ENCODE measurements at regions of chr15 and their contacts with region 1.

Region 1: GRCh38 chr15:70488002-70488605 is 275.3 kb downstream of the UACA start:
- DNase-seq: peak; percentile 75 to 87
- ATAC-seq: peak; percentile 17 to 46 (median 23)
- H3K4me3 ChIP-seq: no peak overlapping the region
- H3K4me3 Mint-ChIP-seq: peak overlapping the region; percentile 49
- H3K27ac ChIP-seq: no peak overlapping the region
- H3K27ac Mint-ChIP-seq: peak overlapping the region in 1 of 2 donors; percentile 86
- H3K4me1 ChIP-seq: peaks cover 65% of the 10 kb centered on the region
- H3K4me1 Mint-ChIP-seq: peaks cover 50 to 79% of the 10 kb centered on the region in 2 donors
- H3K27me3 ChIP-seq: peaks cover 23% of the 10 kb centered on the region
- H3K27me3 Mint-ChIP-seq: peaks cover 34 to 37% of the 10 kb centered on the region in 2 donors
- CTCF ChIP-seq: peak; percentile 88

Region 2: DNA sequence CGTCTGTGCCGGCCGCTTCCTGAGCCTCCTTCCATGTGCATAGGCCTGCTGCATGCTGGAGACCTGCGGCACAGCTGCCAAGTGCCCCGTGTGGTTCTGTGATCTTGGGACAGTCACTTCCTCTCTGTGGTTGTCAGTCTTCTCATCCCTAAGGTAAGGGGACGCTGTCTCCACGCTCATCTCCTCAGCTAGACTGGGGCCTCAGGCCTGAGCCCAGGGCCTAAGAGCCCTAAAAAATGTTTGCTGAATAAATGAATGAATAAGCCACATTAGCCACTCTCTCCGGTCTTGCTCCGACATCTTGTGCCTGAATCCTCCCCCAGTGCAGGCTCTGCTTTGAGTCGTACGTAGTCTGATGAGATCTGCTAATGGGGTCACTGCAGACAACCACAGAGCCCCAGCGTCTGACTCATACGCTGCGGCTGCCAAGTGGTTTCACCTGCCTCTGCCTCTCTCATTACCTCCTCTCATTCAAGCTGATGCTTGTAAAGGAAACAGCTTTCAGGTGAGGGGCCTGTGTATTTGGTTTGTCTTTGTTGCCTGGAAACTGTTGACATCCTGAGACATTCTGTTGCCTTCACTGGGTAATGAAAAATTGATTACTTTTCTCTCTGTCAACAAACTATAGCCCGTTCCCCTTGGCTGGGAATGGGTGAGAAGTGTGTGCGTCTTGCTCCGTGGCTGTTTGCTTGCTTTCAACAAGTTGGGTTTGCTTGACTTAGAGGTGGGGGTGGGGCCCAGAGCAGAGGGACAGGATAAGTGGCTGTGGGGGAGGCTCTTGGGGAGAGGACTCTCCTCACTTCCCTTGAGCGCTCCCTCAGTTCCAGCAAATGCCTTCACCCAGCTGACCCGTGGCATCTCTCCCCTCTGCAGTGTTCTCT is 1019.6 kb before region 1 on chr15:
- intact Hi-C with region 1: loop called (anchors 1 kb)
- DNase-seq: peak; percentile 85 to 95
- ATAC-seq: peak; percentile 82 to 94 (median 92)
- H3K4me3 ChIP-seq: no peak overlapping the region
- H3K4me3 Mint-ChIP-seq: peak overlapping the region; percentile 88
- H3K27ac ChIP-seq: peak overlapping the region; percentile 81
- H3K27ac Mint-ChIP-seq: peak overlapping the region; percentile 89 to 98
- H3K4me1 ChIP-seq: peaks cover 32% of the 10 kb centered on the region
- H3K4me1 Mint-ChIP-seq: peaks cover 20 to 21% of the 10 kb centered on the region in 2 donors
- H3K27me3 ChIP-seq: peaks cover 2% of the 10 kb centered on the region
- H3K27me3 Mint-ChIP-seq: peaks cover 17 to 30% of the 10 kb centered on the region in 2 donors
- CTCF ChIP-seq: no peak

Region 3: GRCh38 chr15:69729161-69729748 is 758.8 kb before region 1 on chr15:
- intact Hi-C with region 1: loop called (anchors 5 kb)
- DNase-seq: peak; percentile 68 to 87
- ATAC-seq: peak in 2 of 3 donors; percentile 37 to 50
- H3K4me3 ChIP-seq: no peak overlapping the region
- H3K4me3 Mint-ChIP-seq: no peak overlapping the region
- H3K27ac ChIP-seq: no peak overlapping the region
- H3K27ac Mint-ChIP-seq: no peak overlapping the region
- H3K4me1 ChIP-seq: peaks cover 39% of the 10 kb centered on the region
- H3K4me1 Mint-ChIP-seq: peaks cover 20 to 38% of the 10 kb centered on the region in 2 donors
- H3K27me3 ChIP-seq: no peaks in the 10 kb centered on the region
- H3K27me3 Mint-ChIP-seq: peaks cover 55 to 57% of the 10 kb centered on the region in 2 donors
- CTCF ChIP-seq: peak; percentile 85

Region 4: GRCh38 chr15:70097337-70098169 is 390.6 kb before region 1 on chr15 and contains the start of gene TLE3:
- intact Hi-C with region 1: loop called (anchors 5 kb)
- DNase-seq: peak; percentile 98 to 99
- ATAC-seq: peak; percentile 57 to 80 (median 70)
- H3K4me3 ChIP-seq: peak within 1 kb of the TSS; percentile 74
- H3K4me3 Mint-ChIP-seq: peak within 1 kb of the TSS; percentile 91
- H3K27ac ChIP-seq: peak within 1 kb of the TSS; percentile 94
- H3K27ac Mint-ChIP-seq: peak within 1 kb of the TSS; percentile 91 to 100
- H3K4me1 ChIP-seq: peaks cover 70% of the 10 kb centered on the region
- H3K4me1 Mint-ChIP-seq: peaks cover 49 to 66% of the 10 kb centered on the region in 2 donors
- H3K27me3 ChIP-seq: peaks cover 26% of the 10 kb centered on the region
- H3K27me3 Mint-ChIP-seq: peaks cover 23 to 38% of the 10 kb centered on the region in 2 donors
- CTCF ChIP-seq: peak; percentile 32
- total RNA-seq, gene TLE3: 32.1 to 94.9 (median 36.7) TPM

Region 5: GRCh38 chr15:70299931-70300869 is 187.9 kb before region 1 on chr15:
- intact Hi-C with region 1: loop called (anchors 2 kb)
- DNase-seq: peak; percentile 80 to 87
- ATAC-seq: peak; percentile 91 to 96 (median 94)
- H3K4me3 ChIP-seq: no peak overlapping the region
- H3K4me3 Mint-ChIP-seq: peak overlapping the region; percentile 55
- H3K27ac ChIP-seq: no peak overlapping the region
- H3K27ac Mint-ChIP-seq: peak overlapping the region; percentile 60 to 67
- H3K4me1 ChIP-seq: peaks cover 24% of the 10 kb centered on the region
- H3K4me1 Mint-ChIP-seq: peaks cover 9 to 11% of the 10 kb centered on the region in 2 donors
- H3K27me3 ChIP-seq: peaks cover 66% of the 10 kb centered on the region
- H3K27me3 Mint-ChIP-seq: peaks cover 32% of the 10 kb centered on the region in 2 donors
- CTCF ChIP-seq: no peak

Region 6: GRCh38 chr15:70528270-70528706 is 40.2 kb after region 1 on chr15:
- intact Hi-C with region 1: loop called (anchors 2 kb)
- DNase-seq: peak; percentile 42 to 86
- ATAC-seq: peak; percentile 91 to 98 (median 97)
- H3K4me3 ChIP-seq: no peak overlapping the region
- H3K4me3 Mint-ChIP-seq: peak overlapping the region; percentile 61
- H3K27ac ChIP-seq: peak overlapping the region; percentile 78
- H3K27ac Mint-ChIP-seq: peak overlapping the region; percentile 78 to 93
- H3K4me1 ChIP-seq: peaks cover 33% of the 10 kb centered on the region
- H3K4me1 Mint-ChIP-seq: peaks cover 13 to 24% of the 10 kb centered on the region in 2 donors
- H3K27me3 ChIP-seq: no peaks in the 10 kb centered on the region
- H3K27me3 Mint-ChIP-seq: peaks cover 0 to 2% of the 10 kb centered on the region in 2 donors
- CTCF ChIP-seq: no peak

Region 7: GRCh38 chr15:70636540-70637165 is 148.5 kb after region 1 on chr15:
- intact Hi-C with region 1: no loop called
- DNase-seq: no peak
- ATAC-seq: no peak
- H3K4me3 ChIP-seq: no peak overlapping the region
- H3K4me3 Mint-ChIP-seq: no peak overlapping the region
- H3K27ac ChIP-seq: no peak overlapping the region
- H3K27ac Mint-ChIP-seq: peak overlapping the region in 1 of 2 donors; percentile 7
- H3K4me1 ChIP-seq: no peaks in the 10 kb centered on the region
- H3K4me1 Mint-ChIP-seq: peaks cover 6 to 13% of the 10 kb centered on the region in 2 donors
- H3K27me3 ChIP-seq: no peaks in the 10 kb centered on the region
- H3K27me3 Mint-ChIP-seq: peaks cover 23 to 37% of the 10 kb centered on the region in 2 donors
- CTCF ChIP-seq: no peak